SK-N-SH (cell line): ENCODE measurements at regions of chr11 and their contacts with region 1.

Region 1: GRCh38 chr11:120500414-120501071 is 11.0 kb upstream of the GRIK4 start:
- DNase-seq: no peak
- H3K4me3 ChIP-seq: no peak overlapping the region
- H3K27ac ChIP-seq: no peak overlapping the region
- H3K4me1 ChIP-seq: no peaks in the 10 kb centered on the region
- H3K27me3 ChIP-seq: no peaks in the 10 kb centered on the region
- CTCF ChIP-seq: no peak
- EP300 ChIP-seq: no peak
- RAD21 ChIP-seq: no peak

Region 2: GRCh38 chr11:120489799-120490198 is 10.7 kb before region 1 on chr11:
- CTCF ChIA-PET with region 1: interaction called, 10 read pairs
- POLR2A ChIA-PET with region 1: interaction called, 5 read pairs
- DNase-seq: no peak
- H3K4me3 ChIP-seq: no peak overlapping the region
- H3K27ac ChIP-seq: no peak overlapping the region
- H3K4me1 ChIP-seq: peaks cover 0 to 2% of the 10 kb centered on the region in 2 experiments; a peak in 1 of 4 replicates
- H3K27me3 ChIP-seq: no peaks in the 10 kb centered on the region
- CTCF ChIP-seq: no peak
- EP300 ChIP-seq: no peak
- RAD21 ChIP-seq: no peak

Region 3: GRCh38 chr11:120601536-120601935 is 101.0 kb after region 1 on chr11:
- CTCF ChIA-PET with region 1: no interaction called
- POLR2A ChIA-PET with region 1: no interaction called
- DNase-seq: no peak
- H3K4me3 ChIP-seq: no peak overlapping the region
- H3K27ac ChIP-seq: no peak overlapping the region
- H3K4me1 ChIP-seq: no peaks in the 10 kb centered on the region; a peak in 1 of 4 replicates
- H3K27me3 ChIP-seq: no peaks in the 10 kb centered on the region; the same call in 1 of the 2 replicates
- CTCF ChIP-seq: no peak
- EP300 ChIP-seq: no peak
- RAD21 ChIP-seq: no peak

Region 4: GRCh38 chr11:120778685-120779490 is 278.3 kb after region 1 on chr11:
- CTCF ChIA-PET with region 1: no interaction called
- POLR2A ChIA-PET with region 1: no interaction called
- DNase-seq: no peak
- H3K4me3 ChIP-seq: no peak overlapping the region
- H3K27ac ChIP-seq: no peak overlapping the region
- H3K4me1 ChIP-seq: peaks cover 0 to 10% of the 10 kb centered on the region in 2 experiments; a peak in 2 of 4 replicates
- H3K27me3 ChIP-seq: no peaks in the 10 kb centered on the region
- CTCF ChIP-seq: no peak
- EP300 ChIP-seq: no peak
- RAD21 ChIP-seq: no peak